ENCODE measurements at regions of chr5 and their contacts with region 1.

Region 1: DNA sequence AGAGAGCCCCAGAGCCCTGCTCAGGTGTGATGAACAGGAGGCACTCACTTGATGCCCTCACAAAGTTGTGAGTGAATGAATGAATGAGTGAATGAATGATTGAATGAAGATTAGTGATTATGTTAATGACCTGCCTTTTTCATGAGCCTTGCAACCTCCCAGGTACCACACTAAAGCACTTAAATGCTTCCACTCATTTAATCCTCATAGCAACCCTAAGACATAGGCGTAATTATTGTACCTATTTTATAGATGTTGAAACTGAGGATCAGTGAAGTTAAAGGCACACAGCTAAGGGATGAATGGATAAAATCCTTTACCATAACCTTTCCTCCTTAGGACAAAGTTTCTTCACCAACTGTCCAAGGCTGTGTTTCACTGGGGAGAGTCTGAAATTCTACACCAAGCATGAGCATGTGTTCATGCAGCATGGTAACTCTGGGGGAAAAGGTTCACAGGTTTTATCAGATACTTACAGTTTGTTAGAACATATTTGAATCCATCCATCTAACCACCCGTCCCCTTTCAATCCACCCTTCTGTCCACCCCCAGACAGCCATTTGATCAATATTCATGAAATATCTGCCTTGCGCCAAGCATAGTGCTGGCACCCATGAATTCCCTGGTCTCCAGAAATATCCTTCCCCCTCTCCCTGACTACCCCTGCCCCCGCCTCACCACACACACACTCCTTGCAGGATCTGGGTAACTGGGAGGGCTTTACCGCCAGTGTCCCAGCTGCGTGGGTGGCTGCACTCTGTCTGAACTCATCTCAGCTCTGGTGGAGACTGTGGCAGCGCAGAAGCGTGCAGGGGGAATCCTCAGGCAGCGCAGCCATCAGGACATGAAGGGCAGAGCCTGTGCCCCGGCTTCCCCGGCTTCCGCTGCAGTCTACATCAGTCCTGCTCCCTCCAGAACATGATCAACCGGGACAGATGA is 6.5 kb upstream of the KCNIP1 start:
- DNase-seq: peak in 3 of 10 donors; percentile 36 to 55 (median 48)
- H3K4me3 ChIP-seq: no peak overlapping the region
- H3K27ac ChIP-seq: no peak overlapping the region
- H3K27me3 ChIP-seq: peaks cover 0 to 6% (median 0%) of the 10 kb centered on the region in 45 donors
- CTCF ChIP-seq: no peak

Region 2: GRCh38 chr5:170614720-170615119 is 117.4 kb after region 1 on chr5:
- intact Hi-C with region 1: loop called in 1 of 2 experiments (anchors 5 kb)
- DNase-seq: no peak
- H3K4me3 ChIP-seq: no peak overlapping the region
- H3K27ac ChIP-seq: no peak overlapping the region
- H3K27me3 ChIP-seq: no peaks in the 10 kb centered on the region
- CTCF ChIP-seq: no peak

Region 3: GRCh38 chr5:170638454-170639220 is 141.3 kb after region 1 on chr5:
- intact Hi-C with region 1: no loop called
- DNase-seq: peak in 9 of 10 donors; percentile 45 to 86 (median 67)
- H3K4me3 ChIP-seq: no peak overlapping the region
- H3K27ac ChIP-seq: no peak overlapping the region
- H3K27me3 ChIP-seq: peaks cover 0 to 18% (median 0%) of the 10 kb centered on the region in 45 donors
- CTCF ChIP-seq: peak; percentile 62 to 92 (median 82)